ENCODE measurements at regions of chr16 and their contacts with region 1.

Region 1: GRCh38 chr16:71288890-71289733 is at the start of gene CMTR2:
- DNase-seq: peak; percentile 83
- H3K4me3 ChIP-seq: peak within 1 kb of the TSS; percentile 77
- H3K27me3 ChIP-seq: 0 out of 2 replicates have a peak, but pooled peaks cover 1% of the 10 kb centered on the region
- CTCF ChIP-seq: peak; percentile 14; the same call in 1 of the 2 replicates
- polyA plus RNA-seq, gene CMTR2: 10.2 and 19.6 TPM in 2 replicates

Region 2: DNA sequence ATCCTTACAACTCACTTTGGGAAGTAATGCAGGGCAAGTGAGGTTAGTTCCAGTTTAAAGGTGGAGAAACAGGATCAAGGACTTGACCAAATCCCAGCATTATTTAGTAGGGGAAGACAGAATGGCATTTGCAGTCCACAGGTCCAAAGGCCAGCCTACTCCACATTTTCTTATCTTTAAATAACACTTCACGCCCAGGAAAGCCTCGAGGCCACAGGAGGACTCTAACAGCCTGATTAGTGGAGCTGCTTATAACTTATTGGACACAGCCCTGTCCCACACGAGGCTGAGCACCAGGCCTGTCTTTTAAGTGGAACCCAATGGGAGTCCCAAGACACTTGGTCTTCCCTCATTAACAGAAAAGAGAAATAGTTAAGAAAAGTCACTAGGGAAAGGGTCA is 46.5 kb before region 1 on chr16:
- CTCF ChIA-PET with region 1: no interaction called
- POLR2A ChIA-PET with region 1: interaction called, 16 read pairs
- DNase-seq: no peak
- H3K4me3 ChIP-seq: no peak overlapping the region
- H3K27me3 ChIP-seq: no peaks in the 10 kb centered on the region
- CTCF ChIP-seq: no peak

Region 3: DNA sequence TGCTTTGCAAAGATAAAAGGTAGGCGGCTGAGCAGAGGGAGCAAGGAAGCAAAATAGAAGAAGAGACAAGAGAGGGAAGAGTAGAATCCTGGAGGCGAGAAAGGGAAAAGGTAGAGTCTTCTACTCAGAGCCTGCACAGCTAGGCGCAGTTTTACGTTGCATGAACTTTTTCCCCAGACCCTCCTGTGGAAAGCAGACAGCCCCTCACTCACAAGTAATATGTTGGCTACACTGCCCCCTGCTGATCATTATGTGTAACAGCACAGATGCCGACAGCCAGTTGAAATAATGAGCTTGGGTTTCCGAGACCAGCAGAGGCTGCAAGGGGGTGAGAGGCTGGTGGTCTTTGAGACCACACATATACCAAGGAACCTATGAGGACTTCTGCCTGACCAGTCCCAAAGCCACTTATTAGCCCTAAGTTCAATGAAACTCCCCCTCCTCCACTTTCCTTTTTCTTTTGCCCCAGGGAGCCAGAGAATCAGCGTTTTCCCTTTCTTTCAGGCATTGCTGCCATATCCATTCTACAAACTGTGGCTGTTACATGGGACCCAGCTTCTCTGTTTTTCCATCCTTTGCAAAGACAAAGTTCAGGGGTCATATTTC is 22.5 kb after region 1 on chr16:
- CTCF ChIA-PET with region 1: interaction called, 14 read pairs
- POLR2A ChIA-PET with region 1: no interaction called
- DNase-seq: no peak
- H3K4me3 ChIP-seq: no peak overlapping the region
- H3K27me3 ChIP-seq: no peaks in the 10 kb centered on the region
- CTCF ChIP-seq: peak; percentile 70